ENCODE measurements at regions of chr6 and their contacts with region 1.

Region 1: DNA sequence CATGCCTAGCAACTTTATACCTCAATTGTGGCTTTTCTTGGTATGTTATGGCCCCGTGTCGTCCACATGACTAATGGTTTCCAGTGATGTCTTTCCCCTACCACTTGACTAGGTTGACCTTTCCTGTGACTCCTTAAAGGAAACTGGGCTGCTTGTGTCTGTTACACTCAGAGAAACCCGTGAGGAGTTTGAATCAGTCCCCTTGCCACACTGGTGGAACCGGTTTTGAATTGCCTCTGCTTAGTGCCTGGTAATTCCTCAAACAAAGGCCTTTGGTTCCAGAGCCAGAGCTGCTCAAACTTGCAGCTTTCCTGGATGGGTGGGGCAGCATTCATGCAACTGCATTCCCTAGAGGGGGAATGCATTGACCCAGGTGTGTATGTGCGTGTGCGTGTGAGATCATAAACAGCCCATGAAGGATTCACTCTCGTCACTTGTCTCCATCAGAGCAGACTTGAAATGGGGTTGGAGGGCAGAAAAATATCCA is 22.0 kb downstream of the ECT2L start:
- DNase-seq: peak; percentile 43
- ATAC-seq: peak; percentile 75
- H3K4me3 Mint-ChIP-seq: no peak overlapping the region
- H3K27ac Mint-ChIP-seq: peak overlapping the region; percentile 82
- H3K4me1 Mint-ChIP-seq: peaks cover 24% of the 10 kb centered on the region
- H3K27me3 Mint-ChIP-seq: no peaks in the 10 kb centered on the region

Region 2: DNA sequence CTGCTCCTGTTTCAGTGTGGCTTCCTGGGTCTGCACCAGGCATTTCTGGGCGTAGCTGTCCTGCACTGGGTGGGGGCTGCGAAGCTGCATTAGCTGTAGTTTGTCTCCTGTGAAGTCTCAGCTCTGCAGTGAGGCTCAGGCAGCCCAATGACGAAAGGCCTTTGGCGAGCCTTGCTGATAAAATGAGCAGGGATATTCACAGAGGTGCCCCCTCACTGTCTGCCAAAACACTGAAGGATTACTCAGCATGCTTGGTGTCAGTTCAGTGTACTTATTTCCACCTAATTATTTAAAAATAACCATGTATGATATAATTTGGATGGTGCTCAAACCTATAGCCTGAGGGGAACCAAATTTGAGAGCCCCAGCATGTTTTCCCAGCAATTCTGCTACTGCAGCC is 51.5 kb after region 1 on chr6:
- CTCF ChIA-PET with region 1: no interaction called
- POLR2A ChIA-PET with region 1: no interaction called
- intact Hi-C with region 1: loop called in 1 of 2 experiments (anchors 5 kb)
- DNase-seq: no peak
- ATAC-seq: no peak
- H3K4me3 Mint-ChIP-seq: no peak overlapping the region
- H3K27ac Mint-ChIP-seq: no peak overlapping the region
- H3K4me1 Mint-ChIP-seq: peaks cover 22% of the 10 kb centered on the region
- H3K27me3 Mint-ChIP-seq: no peaks in the 10 kb centered on the region

Region 3: DNA sequence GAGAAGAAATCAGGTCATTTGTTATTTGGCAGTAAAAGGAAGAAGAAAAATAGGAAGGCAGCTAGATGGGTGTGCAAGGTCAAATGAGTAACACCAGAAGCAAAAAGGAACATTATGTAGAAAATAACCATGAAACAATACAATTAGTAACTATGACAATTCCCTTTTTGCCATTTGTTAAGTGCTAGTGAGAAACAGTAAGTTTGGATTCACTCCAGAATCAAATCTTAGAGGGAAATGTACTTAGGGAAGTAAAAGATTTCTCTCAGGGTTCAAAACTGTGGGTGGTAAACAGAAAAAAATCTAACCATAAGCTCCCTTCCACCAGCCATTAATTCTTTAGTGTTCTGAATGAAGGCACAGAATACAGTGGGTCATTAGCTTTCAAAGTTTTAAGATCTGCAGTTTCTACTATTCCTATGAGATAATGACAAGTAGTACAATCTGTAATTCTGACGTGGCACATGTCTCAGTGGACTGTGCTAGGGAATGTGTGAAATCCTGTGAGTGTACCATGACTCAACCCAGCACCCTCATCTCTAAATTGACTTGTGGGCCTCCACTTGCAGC is 153.1 kb after region 1 on chr6:
- CTCF ChIA-PET with region 1: interaction called, 8 read pairs
- POLR2A ChIA-PET with region 1: no interaction called
- intact Hi-C with region 1: loop called in 1 of 2 experiments (anchors 5 kb)
- DNase-seq: peak; percentile 52
- ATAC-seq: peak; percentile 98
- H3K4me3 Mint-ChIP-seq: no peak overlapping the region
- H3K27ac Mint-ChIP-seq: peak overlapping the region; percentile 49
- H3K4me1 Mint-ChIP-seq: peaks cover 65% of the 10 kb centered on the region
- H3K27me3 Mint-ChIP-seq: no peaks in the 10 kb centered on the region

Region 4: GRCh38 chr6:139109558-139109957 is 291.7 kb after region 1 on chr6:
- CTCF ChIA-PET with region 1: no interaction called
- POLR2A ChIA-PET with region 1: no interaction called
- intact Hi-C with region 1: loop called (anchors 2 to 5 kb)
- DNase-seq: peak; percentile 74
- ATAC-seq: peak; percentile 62
- H3K4me3 Mint-ChIP-seq: no peak overlapping the region
- H3K27ac Mint-ChIP-seq: peak overlapping the region; percentile 11
- H3K4me1 Mint-ChIP-seq: peaks cover 48% of the 10 kb centered on the region
- H3K27me3 Mint-ChIP-seq: no peaks in the 10 kb centered on the region

Region 5: GRCh38 chr6:139173172-139173571 is 355.3 kb after region 1 on chr6:
- CTCF ChIA-PET with region 1: no interaction called
- POLR2A ChIA-PET with region 1: no interaction called
- intact Hi-C with region 1: loop called in 1 of 2 experiments (anchors 10 kb)
- DNase-seq: no peak
- ATAC-seq: peak; percentile 89
- H3K4me3 Mint-ChIP-seq: no peak overlapping the region
- H3K27ac Mint-ChIP-seq: peak overlapping the region; percentile 87
- H3K4me1 Mint-ChIP-seq: peaks cover 91% of the 10 kb centered on the region
- H3K27me3 Mint-ChIP-seq: no peaks in the 10 kb centered on the region

Region 6: DNA sequence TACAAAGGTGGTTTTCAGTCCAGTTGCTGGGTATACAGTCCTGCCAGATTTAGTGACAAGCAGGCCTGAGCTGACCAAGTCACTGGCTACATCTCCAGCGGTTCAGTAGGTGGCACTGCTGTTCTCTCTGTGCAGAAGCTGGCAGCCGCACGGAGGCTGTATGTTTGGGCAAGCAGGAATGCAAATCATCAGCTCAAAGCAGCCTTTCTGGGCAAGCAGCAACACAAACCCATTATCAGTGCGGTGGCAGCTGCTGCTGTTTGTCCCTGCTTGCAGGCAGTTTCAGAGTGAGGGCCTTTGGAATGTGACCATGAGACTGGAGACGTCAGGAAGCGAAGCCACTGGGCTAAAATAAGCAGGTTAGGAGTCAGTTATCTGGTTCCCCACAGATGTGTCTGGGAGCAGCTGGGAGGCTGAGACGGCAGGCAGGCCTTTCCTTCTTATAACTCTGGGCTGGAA is 401.4 kb after region 1 on chr6:
- CTCF ChIA-PET with region 1: interaction called, 4 read pairs
- POLR2A ChIA-PET with region 1: no interaction called
- intact Hi-C with region 1: loop called in 1 of 2 experiments (anchors 5 kb)
- DNase-seq: peak; percentile 86
- ATAC-seq: peak; percentile 100
- H3K4me3 Mint-ChIP-seq: no peak overlapping the region
- H3K27ac Mint-ChIP-seq: peak overlapping the region; percentile 73
- H3K4me1 Mint-ChIP-seq: peaks cover 10% of the 10 kb centered on the region
- H3K27me3 Mint-ChIP-seq: no peaks in the 10 kb centered on the region

Region 7: GRCh38 chr6:139364302-139364981 is 546.6 kb after region 1 on chr6:
- CTCF ChIA-PET with region 1: interaction called, 16 read pairs
- POLR2A ChIA-PET with region 1: no interaction called
- intact Hi-C with region 1: loop called (anchors 1 kb)
- DNase-seq: no peak
- ATAC-seq: peak; percentile 57
- H3K4me3 Mint-ChIP-seq: no peak overlapping the region
- H3K27ac Mint-ChIP-seq: no peak overlapping the region
- H3K4me1 Mint-ChIP-seq: peaks cover 25% of the 10 kb centered on the region
- H3K27me3 Mint-ChIP-seq: no peaks in the 10 kb centered on the region

Measured in activated CD4-positive, alpha-beta T cell treated with anti-CD3 and anti-CD28 coated beads for 36 hours (primary cell).